Astrocyte of the spinal cord (primary cell): ENCODE measurements at regions of chr6 and their contacts with region 1.

Region 1: DNA sequence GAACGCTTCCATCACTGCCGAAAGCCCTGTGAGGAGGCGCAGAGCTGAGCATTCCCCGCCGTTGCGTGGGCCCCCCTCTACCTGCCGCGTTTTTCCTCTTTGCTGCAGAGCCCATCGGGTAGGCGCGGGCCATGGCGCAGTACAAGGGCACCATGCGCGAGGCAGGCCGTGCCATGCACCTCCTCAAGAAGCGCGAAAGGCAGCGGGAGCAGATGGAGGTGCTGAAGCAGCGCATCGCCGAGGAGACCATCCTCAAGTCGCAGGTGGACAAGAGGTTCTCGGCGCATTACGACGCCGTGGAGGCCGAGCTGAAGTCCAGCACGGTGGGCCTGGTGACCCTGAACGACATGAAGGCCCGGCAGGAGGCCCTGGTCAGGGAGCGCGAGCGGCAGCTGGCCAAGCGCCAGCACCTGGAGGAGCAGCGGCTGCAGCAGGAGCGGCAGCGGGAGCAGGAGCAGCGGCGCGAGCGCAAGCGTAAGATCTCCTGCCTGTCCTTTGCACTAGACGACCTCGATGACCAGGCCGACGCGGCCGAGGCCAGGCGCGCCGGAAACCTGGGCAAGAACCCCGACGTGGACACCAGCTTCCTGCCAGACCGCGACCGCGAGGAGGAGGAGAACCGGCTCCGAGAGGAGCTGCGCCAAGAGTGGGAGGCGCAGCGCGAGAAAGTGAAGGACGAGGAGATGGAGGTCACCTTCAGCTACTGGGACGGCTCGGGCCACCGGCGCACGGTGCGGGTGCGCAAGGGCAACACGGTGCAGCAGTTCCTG is 693 bp downstream of the FAM50B start:
- DNase-seq: peak; percentile 16
- H3K4me3 ChIP-seq: peak overlapping the region; percentile 59
- CTCF ChIP-seq: no peak

Region 2: GRCh38 chr6:3977875-3978711 is 128.2 kb after region 1 on chr6:
- in situ Hi-C with region 1: loop called (anchors 25 kb)
- DNase-seq: peak; percentile 96
- H3K4me3 ChIP-seq: no peak overlapping the region
- CTCF ChIP-seq: peak; percentile 80